ENCODE measurements at regions of chr15 and their contacts with region 1.

Region 1: GRCh38 chr15:48888836-48889235 is 10.9 kb downstream of the EID1 start:
- DNase-seq: no peak
- ATAC-seq: no peak
- H3K4me3 ChIP-seq: no peak overlapping the region
- H3K27ac ChIP-seq: no peak overlapping the region
- H3K4me1 ChIP-seq: no peaks in the 10 kb centered on the region
- H3K27me3 ChIP-seq: no peaks in the 10 kb centered on the region
- CTCF ChIP-seq: no peak
- EP300 ChIP-seq: no peak
- POLR2A ChIP-seq: no peak
- RAD21 ChIP-seq: no peak

Region 2: DNA sequence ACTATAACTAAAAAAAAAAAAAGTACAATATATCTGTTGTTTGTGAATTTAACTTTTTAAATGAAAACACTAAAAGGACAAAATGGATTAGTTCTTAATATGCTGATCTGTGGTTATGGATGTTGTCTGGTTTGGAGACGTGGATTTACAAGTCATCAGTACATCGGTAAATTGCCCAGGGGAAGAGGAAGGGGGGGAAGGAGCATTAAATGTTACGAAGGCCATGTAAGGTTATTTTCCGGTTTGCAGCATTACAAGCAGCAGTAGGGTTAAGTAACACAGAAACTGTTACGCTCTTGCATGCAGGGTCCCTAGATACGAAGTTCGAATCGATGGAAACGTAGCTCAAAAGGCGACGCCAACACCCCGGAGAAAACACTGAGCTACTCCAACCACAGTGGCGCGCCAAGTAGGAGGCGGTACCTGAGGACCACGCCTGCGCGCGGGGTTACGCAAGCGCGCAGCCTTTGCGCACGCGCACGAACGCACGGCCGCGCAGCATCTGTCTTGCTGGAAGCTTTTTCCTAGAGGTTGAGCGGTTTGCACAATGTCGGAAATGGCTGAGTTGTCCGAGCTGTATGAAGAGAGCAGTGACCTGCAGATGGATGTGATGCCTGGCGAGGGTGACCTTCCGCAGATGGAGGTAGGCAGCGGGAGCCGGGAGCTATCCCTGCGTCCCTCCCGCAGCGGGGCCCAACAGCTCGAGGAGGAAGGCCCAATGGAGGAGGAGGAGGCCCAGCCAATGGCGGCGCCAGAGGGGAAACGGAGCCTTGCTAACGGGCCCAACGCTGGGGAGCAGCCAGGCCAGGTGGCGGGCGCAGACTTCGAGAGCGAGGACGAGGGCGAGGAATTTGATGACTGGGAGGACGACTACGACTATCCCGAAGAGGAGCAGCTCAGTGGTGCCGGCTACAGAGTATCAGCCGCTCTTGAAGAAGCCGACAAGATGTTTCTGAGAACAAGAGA is 10.9 kb before region 1 on chr15 and contains the start of gene EID1:
- CTCF ChIA-PET with region 1: interaction called, 8 read pairs
- POLR2A ChIA-PET with region 1: interaction called, 5 read pairs
- RAD21 ChIA-PET with region 1: interaction called, 16 read pairs
- SMC1A ChIA-PET with region 1: interaction called, 7 read pairs
- in situ Hi-C with region 1: no loop called
- intact Hi-C with region 1: no loop called
- DNase-seq: peak; percentile 87
- ATAC-seq: peak; percentile 94
- H3K4me3 ChIP-seq: peak within 1 kb of the TSS; percentile 67
- H3K27ac ChIP-seq: peak within 1 kb of the TSS; percentile 85
- H3K4me1 ChIP-seq: peaks cover 4% of the 10 kb centered on the region
- H3K27me3 ChIP-seq: no peaks in the 10 kb centered on the region
- CTCF ChIP-seq: no peak
- EP300 ChIP-seq: peak in 1 of 2 experiments; percentile 40; a peak in 1 of 4 replicates
- POLR2A ChIP-seq: peak; percentile 98
- RAD21 ChIP-seq: no peak
- polyA plus RNA-seq, gene EID1: 45.6 to 79.5 TPM